Activated T-helper 2 cell treated with anti-CD3 and anti-CD28 coated beads, Interferon-gamma antibody, Interleukin-2, Interleukin-4, amounts not matched to agents 10 μg/mL and 5 μg/mL and 100 μg/mL, durations not matched to agents 14 hours and 24 hours and 36 hours (primary cell): ENCODE measurements at regions of chr7 and their contacts with region 1.

Region 1: GRCh38 chr7:38424750-38425463 is 151.5 kb upstream of the TARP start:
- DNase-seq: no peak
- H3K4me3 Mint-ChIP-seq: no peak overlapping the region
- H3K27ac Mint-ChIP-seq: peak overlapping the region; percentile 44
- H3K4me1 Mint-ChIP-seq: peaks cover 58% of the 10 kb centered on the region
- H3K27me3 Mint-ChIP-seq: peaks cover 4% of the 10 kb centered on the region

Region 2: GRCh38 chr7:38411404-38411803 is 13.5 kb before region 1 on chr7:
- intact Hi-C with region 1: loop called (anchors 1 kb)
- DNase-seq: no peak
- H3K4me3 Mint-ChIP-seq: no peak overlapping the region
- H3K27ac Mint-ChIP-seq: no peak overlapping the region
- H3K4me1 Mint-ChIP-seq: peaks cover 35% of the 10 kb centered on the region
- H3K27me3 Mint-ChIP-seq: peaks cover 3% of the 10 kb centered on the region

Region 3: GRCh38 chr7:38463277-38464225 is 38.6 kb after region 1 on chr7:
- intact Hi-C with region 1: loop called (anchors 2 kb)
- DNase-seq: peak; percentile 68
- H3K4me3 Mint-ChIP-seq: peak overlapping the region; percentile 11
- H3K27ac Mint-ChIP-seq: peak overlapping the region; percentile 57
- H3K4me1 Mint-ChIP-seq: peaks cover 19% of the 10 kb centered on the region
- H3K27me3 Mint-ChIP-seq: no peaks in the 10 kb centered on the region

Region 4: GRCh38 chr7:38478404-38478803 is 53.5 kb after region 1 on chr7:
- intact Hi-C with region 1: loop called (anchors 5 kb)
- DNase-seq: no peak
- H3K4me3 Mint-ChIP-seq: no peak overlapping the region
- H3K27ac Mint-ChIP-seq: no peak overlapping the region
- H3K4me1 Mint-ChIP-seq: no peaks in the 10 kb centered on the region
- H3K27me3 Mint-ChIP-seq: peaks cover 15% of the 10 kb centered on the region

Region 5: GRCh38 chr7:38574086-38574485 is 149.2 kb after region 1 on chr7:
- intact Hi-C with region 1: no loop called
- DNase-seq: no peak
- H3K4me3 Mint-ChIP-seq: no peak overlapping the region
- H3K27ac Mint-ChIP-seq: no peak overlapping the region
- H3K4me1 Mint-ChIP-seq: no peaks in the 10 kb centered on the region
- H3K27me3 Mint-ChIP-seq: no peaks in the 10 kb centered on the region